Activated CD4-positive, alpha-beta memory T cell treated with anti-CD3 and anti-CD28 coated beads for 36 hours (primary cell): ENCODE measurements at regions of chr1 and their contacts with region 1.

Region 1: GRCh38 chr1:93846211-93846991 is 32.6 kb downstream of the DNTTIP2 start:
- DNase-seq: peak; percentile 85
- H3K4me3 Mint-ChIP-seq: peak overlapping the region; percentile 88
- H3K27ac Mint-ChIP-seq: peak overlapping the region; percentile 89
- H3K4me1 Mint-ChIP-seq: peaks cover 27% of the 10 kb centered on the region
- H3K27me3 Mint-ChIP-seq: peaks cover 4% of the 10 kb centered on the region

Region 2: GRCh38 chr1:92476071-92476631 is 1370.2 kb before region 1 on chr1:
- CTCF ChIA-PET with region 1: no interaction called
- POLR2A ChIA-PET with region 1: no interaction called
- intact Hi-C with region 1: loop called (anchors 10 kb)
- DNase-seq: peak; percentile 85
- H3K4me3 Mint-ChIP-seq: peak overlapping the region; percentile 54
- H3K27ac Mint-ChIP-seq: peak overlapping the region; percentile 86
- H3K4me1 Mint-ChIP-seq: peaks cover 87% of the 10 kb centered on the region
- H3K27me3 Mint-ChIP-seq: no peaks in the 10 kb centered on the region

Region 3: DNA sequence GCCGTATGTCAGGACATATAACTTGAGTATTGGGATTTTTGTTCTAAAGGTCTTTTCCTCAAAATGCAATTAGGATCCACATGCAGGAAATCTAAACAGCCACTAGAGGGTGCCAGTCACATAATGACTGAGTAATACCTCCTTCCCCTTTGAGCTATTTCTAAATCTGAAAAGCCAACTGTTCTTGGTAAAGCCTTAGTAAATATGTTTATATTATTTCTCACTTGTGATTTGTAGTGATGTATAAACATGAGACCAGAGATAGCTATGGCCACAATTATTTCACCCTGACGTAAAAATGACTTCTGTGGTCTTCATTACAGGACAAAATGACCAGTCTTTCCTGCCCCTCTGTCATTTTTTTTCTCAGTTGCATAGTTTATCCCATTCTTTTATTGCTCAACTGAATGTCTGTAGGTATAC is 541.7 kb before region 1 on chr1:
- CTCF ChIA-PET with region 1: interaction called, 20 read pairs
- POLR2A ChIA-PET with region 1: no interaction called
- intact Hi-C with region 1: loop called (anchors 1 kb)
- DNase-seq: peak; percentile 26
- H3K4me3 Mint-ChIP-seq: no peak overlapping the region
- H3K27ac Mint-ChIP-seq: no peak overlapping the region
- H3K4me1 Mint-ChIP-seq: no peaks in the 10 kb centered on the region
- H3K27me3 Mint-ChIP-seq: no peaks in the 10 kb centered on the region

Region 4: DNA sequence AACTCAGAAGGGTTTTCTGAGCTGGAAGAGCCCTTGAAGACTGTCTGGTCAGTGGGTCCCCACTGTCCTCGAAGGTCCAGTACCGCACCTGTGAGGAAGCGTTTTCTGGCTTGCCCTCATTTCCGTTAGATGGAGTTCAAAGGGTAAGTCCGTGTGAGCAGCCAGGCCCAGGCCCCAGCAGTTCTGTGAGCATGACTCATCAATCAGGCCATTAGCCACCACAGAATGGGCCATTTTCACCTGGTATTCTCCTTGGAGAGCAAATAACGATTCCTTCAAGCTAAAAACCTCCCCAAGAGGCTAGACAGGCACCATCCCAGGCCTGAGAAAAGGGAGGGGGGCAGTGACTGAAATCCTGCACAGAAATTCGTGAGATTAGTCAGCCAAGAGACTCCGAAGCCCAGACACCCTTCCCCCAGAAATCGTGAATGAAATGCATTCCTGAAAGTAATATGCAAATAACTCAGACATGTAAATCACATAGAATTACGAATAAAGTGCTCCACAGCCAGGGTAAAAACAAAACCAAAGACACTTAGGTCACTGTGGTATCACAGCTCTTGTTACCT is 230.7 kb before region 1 on chr1:
- CTCF ChIA-PET with region 1: interaction called, 13 read pairs
- POLR2A ChIA-PET with region 1: interaction called, 7 read pairs
- intact Hi-C with region 1: loop called (anchors 1 kb)
- DNase-seq: peak; percentile 87
- H3K4me3 Mint-ChIP-seq: peak overlapping the region; percentile 45
- H3K27ac Mint-ChIP-seq: peak overlapping the region; percentile 84
- H3K4me1 Mint-ChIP-seq: peaks cover 26% of the 10 kb centered on the region
- H3K27me3 Mint-ChIP-seq: peaks cover 6% of the 10 kb centered on the region

Region 5: GRCh38 chr1:93715529-93716126 is 130.8 kb before region 1 on chr1:
- CTCF ChIA-PET with region 1: no interaction called
- POLR2A ChIA-PET with region 1: no interaction called
- intact Hi-C with region 1: loop called (anchors 5 kb)
- DNase-seq: peak; percentile 65
- H3K4me3 Mint-ChIP-seq: no peak overlapping the region
- H3K27ac Mint-ChIP-seq: peak overlapping the region; percentile 57
- H3K4me1 Mint-ChIP-seq: peaks cover 40% of the 10 kb centered on the region
- H3K27me3 Mint-ChIP-seq: peaks cover 12% of the 10 kb centered on the region

Region 6: DNA sequence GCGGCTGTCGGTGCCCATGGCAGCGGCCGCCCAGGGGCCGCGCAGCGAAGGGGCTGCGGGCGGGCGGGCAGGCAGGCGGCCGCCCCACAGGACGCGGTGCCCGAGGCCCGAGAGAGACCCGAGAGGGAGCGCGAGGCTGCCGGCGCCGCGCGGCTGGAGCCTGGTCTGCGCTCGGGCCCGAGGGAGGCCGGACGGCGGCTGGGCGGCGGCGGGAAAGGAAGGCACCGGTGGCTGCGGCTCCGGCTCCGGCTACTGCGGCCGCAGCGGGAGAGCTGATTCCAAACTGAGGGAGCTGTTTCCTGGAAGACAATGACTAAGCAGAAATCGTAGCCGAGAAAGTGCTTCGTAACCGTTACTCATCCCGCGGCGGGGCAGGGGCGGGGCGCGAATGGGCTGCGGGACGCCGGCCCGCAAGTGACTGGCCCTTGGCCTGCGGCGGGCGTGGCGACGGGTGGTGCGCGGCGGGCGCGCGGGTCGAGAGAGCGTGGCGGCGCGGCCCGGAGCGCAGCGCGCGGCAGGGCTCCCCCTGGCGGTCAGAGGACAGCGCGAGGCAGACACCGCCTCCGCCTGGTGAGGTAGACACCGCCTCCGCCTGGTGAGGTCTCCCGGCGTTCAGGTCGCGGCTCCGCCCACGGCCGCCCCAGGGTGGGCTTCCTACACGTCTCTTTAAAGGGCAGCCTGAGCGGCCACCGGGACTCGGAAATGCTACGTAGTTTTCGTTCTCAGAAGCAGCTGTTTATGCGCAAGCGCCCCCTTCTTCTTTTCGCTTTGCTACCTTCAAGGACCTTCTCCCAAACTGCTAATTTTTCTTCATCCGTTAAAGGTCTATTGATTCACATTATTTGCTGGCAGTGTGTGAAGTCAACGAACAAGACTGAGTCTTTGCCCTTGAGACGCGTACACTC is 63.0 kb after region 1 on chr1 and contains the start of gene GCLM:
- CTCF ChIA-PET with region 1: interaction called, 4 read pairs
- POLR2A ChIA-PET with region 1: no interaction called
- intact Hi-C with region 1: loop called (anchors 1 kb)
- DNase-seq: peak; percentile 92
- H3K4me3 Mint-ChIP-seq: peak within 1 kb of the TSS; percentile 91
- H3K27ac Mint-ChIP-seq: peak within 1 kb of the TSS; percentile 87
- H3K4me1 Mint-ChIP-seq: peaks cover 29% of the 10 kb centered on the region
- H3K27me3 Mint-ChIP-seq: no peaks in the 10 kb centered on the region
- total RNA-seq, gene GCLM: 21.7 to 26.5 TPM

Region 7: GRCh38 chr1:93925206-93925605 is 78.8 kb after region 1 on chr1:
- CTCF ChIA-PET with region 1: no interaction called
- POLR2A ChIA-PET with region 1: no interaction called
- intact Hi-C with region 1: no loop called
- DNase-seq: no peak
- H3K4me3 Mint-ChIP-seq: no peak overlapping the region
- H3K27ac Mint-ChIP-seq: no peak overlapping the region
- H3K4me1 Mint-ChIP-seq: no peaks in the 10 kb centered on the region
- H3K27me3 Mint-ChIP-seq: no peaks in the 10 kb centered on the region

Region 8: GRCh38 chr1:95233737-95234500 is 1387.5 kb after region 1 on chr1 and contains the start of gene RWDD3:
- CTCF ChIA-PET with region 1: no interaction called
- POLR2A ChIA-PET with region 1: no interaction called
- intact Hi-C with region 1: loop called (anchors 5 kb)
- DNase-seq: peak; percentile 95
- H3K4me3 Mint-ChIP-seq: peak within 1 kb of the TSS; percentile 86
- H3K27ac Mint-ChIP-seq: peak within 1 kb of the TSS; percentile 70
- H3K4me1 Mint-ChIP-seq: peaks cover 41% of the 10 kb centered on the region
- H3K27me3 Mint-ChIP-seq: peaks cover 7% of the 10 kb centered on the region
- total RNA-seq, gene RWDD3: 10.8 to 13.9 TPM